Thyroid gland (tissue), 4 donors: ENCODE measurements at regions of chr5 and their contacts with region 1.

Region 1: DNA sequence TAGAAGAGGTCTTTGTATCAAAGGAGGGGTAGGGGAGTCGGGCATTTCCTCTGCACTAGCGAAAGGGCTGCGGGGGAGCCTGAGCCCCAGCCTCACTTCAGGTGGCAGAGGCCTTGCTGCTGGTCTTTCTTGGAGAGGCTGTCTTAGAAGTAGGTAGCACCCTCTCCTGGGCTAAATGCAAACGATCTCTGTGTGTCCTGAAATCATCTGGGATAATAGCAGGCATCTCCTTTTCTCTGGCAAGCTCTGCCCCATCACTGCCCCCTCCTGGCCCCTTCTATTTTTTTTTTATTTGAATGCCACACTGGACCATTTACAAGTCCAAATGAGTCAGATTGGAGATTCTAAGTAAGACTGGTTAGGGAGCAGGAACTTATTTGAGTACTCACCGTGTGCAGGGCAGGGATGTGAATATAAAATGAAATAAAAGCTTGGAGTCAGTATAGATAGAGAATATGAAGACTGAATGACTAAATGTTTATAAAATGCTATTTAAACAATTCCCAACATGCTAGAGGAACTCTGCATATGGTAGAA is 137.1 kb downstream of the FGF1 start:
- DNase-seq: peak; percentile 57 to 65
- H3K4me3 ChIP-seq: no peak overlapping the region
- H3K27ac ChIP-seq: no peak overlapping the region
- H3K4me1 ChIP-seq: peaks cover 0 to 13% of the 10 kb centered on the region in 2 donors
- H3K27me3 ChIP-seq: no peaks in the 10 kb centered on the region
- CTCF ChIP-seq: peak; percentile 40 to 90 (median 72)
- POLR2A ChIP-seq: no peak

Region 2: GRCh38 chr5:141992349-141992963 is 556.4 kb before region 1 on chr5:
- intact Hi-C with region 1: loop called (anchors 5 kb)
- DNase-seq: peak; percentile 82 to 87
- H3K4me3 ChIP-seq: no peak overlapping the region
- H3K27ac ChIP-seq: no peak overlapping the region
- H3K4me1 ChIP-seq: peaks cover 7 to 15% of the 10 kb centered on the region in 2 donors
- H3K27me3 ChIP-seq: no peaks in the 10 kb centered on the region
- CTCF ChIP-seq: peak; percentile 49 to 79 (median 71)
- POLR2A ChIP-seq: no peak

Region 3: DNA sequence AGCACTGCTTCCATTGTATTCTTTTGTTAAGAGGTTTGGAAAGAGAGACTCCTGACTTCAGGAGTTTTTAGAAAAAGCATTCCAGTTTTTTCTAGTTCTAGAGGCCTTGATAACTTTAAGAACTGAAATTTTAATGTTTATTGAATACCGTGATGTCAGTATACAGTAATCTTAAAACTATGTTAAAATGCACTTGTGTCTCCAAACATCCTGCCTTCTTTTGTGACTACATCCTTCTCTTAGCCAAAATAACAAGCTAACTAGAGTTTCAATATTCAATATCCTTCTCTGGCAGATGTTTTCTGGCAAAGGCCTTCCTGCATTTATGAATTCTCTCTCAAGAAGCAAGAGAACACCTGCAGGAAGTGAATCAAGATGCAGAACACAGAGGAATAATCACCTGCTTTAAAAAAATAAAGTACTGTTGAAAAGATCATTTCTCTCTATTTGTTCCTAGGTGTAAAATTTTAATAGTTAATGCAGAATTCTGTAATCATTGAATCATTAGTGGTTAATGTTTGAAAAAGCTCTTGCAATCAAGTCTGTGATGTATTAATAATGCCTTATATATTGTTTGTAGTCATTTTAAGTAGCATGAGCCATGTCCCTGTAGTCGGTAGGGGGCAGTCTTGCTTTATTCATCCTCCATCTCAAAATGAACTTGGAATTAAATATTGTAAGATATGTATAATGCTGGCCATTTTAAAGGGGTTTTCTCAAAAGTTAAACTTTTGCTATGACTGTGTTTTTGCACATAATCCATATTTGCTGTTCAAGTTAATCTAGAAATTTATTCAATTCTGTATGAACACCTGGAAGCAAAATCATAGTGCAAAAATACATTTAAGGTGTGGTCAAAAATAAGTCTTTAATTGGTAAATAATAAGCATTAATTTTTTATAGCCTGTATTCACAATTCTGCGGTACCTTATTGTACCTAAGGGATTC is 397.1 kb before region 1 on chr5:
- intact Hi-C with region 1: loop called (anchors 5 kb)
- DNase-seq: peak; percentile 23 to 30
- H3K4me3 ChIP-seq: no peak overlapping the region
- H3K27ac ChIP-seq: no peak overlapping the region
- H3K4me1 ChIP-seq: no peaks in the 10 kb centered on the region
- H3K27me3 ChIP-seq: no peaks in the 10 kb centered on the region
- CTCF ChIP-seq: peak; percentile 27 to 81 (median 72)
- POLR2A ChIP-seq: no peak

Region 4: GRCh38 chr5:142316051-142316450 is 232.8 kb before region 1 on chr5:
- intact Hi-C with region 1: loop called (anchors 5 kb)
- DNase-seq: peak; percentile 13 to 14
- H3K4me3 ChIP-seq: no peak overlapping the region
- H3K27ac ChIP-seq: peak overlapping the region in 1 of 3 donors; percentile 12
- H3K4me1 ChIP-seq: peaks cover 6 to 48% of the 10 kb centered on the region in 2 donors
- H3K27me3 ChIP-seq: no peaks in the 10 kb centered on the region
- CTCF ChIP-seq: no peak
- POLR2A ChIP-seq: no peak

Region 5: DNA sequence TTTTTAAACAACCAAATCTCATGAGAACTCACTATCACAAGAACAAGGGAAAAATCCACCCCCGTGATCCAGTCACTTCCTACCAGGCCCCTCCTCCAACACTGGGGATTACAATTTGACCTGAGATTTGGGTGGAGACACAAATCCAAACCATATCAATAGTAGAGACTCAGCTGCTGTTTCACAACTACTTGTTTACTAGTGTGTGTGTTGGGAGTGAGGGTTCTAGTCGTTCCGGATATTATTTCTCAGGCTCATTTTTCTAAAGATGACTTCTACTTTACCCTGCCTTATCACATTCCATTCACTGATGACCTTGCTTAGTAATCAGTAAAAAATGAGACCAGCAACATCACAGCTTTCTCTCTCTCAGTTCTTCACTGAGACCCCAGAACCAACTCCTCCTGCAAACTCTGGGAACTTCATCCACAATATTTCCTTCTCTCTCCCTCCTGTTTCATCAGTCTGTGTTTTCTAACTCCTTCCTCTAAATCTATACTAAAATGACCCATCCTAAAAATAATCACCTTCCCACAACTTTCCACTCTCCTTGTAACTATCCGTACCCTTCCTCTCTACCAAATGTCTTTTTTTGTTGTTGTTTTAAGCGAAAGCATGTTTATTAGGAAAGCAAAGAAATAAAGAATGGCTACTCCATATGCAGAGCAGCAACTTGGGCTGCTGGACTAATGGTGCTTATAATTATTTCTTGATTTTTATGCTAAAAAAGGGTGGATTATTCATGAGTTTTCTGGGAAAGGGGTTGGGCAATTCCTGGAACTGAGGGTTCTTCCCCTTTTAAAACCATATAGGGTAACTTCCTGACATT is 102.5 kb before region 1 on chr5:
- intact Hi-C with region 1: loop called (anchors 10 kb)
- DNase-seq: no peak
- H3K4me3 ChIP-seq: no peak overlapping the region
- H3K27ac ChIP-seq: peak overlapping the region in 1 of 3 donors; percentile 35
- H3K4me1 ChIP-seq: peaks cover 0 to 9% of the 10 kb centered on the region in 2 donors
- H3K27me3 ChIP-seq: no peaks in the 10 kb centered on the region
- CTCF ChIP-seq: no peak
- POLR2A ChIP-seq: no peak